ENCODE measurements at regions of chr3 and their contacts with region 1.

Region 1: DNA sequence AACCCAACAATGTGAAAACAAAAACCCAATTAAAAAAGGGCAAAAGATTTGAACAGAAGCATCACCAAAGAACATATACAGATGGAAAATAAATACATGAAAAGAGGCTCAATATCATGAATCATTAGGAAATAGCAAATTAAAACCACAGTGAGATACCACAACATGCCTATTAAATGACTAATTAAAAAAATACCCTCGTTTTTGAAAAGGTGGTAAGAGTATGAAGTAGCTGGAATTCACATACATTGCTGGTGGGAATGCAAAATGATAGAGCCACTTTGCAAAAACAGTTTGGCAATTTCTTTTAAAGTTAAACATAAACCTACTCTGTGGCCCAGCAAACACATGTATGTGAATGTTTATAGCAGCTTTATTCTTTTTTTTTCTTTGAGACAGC is 75.8 kb downstream of the B3GNT5 start:
- DNase-seq: no peak
- H3K4me3 Mint-ChIP-seq: no peak overlapping the region
- H3K27ac Mint-ChIP-seq: peak overlapping the region; percentile 2
- H3K4me1 Mint-ChIP-seq: peaks cover 45% of the 10 kb centered on the region
- H3K27me3 Mint-ChIP-seq: peaks cover 8% of the 10 kb centered on the region
- CTCF ChIP-seq: no peak

Region 2: GRCh38 chr3:183252973-183253901 is 75.6 kb before region 1 on chr3 and contains the start of gene B3GNT5:
- CTCF ChIA-PET with region 1: no interaction called
- intact Hi-C with region 1: loop called (anchors 2 kb)
- DNase-seq: peak; percentile 91
- H3K4me3 Mint-ChIP-seq: peak within 1 kb of the TSS; percentile 84
- H3K27ac Mint-ChIP-seq: peak within 1 kb of the TSS; percentile 55
- H3K4me1 Mint-ChIP-seq: peaks cover 30% of the 10 kb centered on the region
- H3K27me3 Mint-ChIP-seq: no peaks in the 10 kb centered on the region
- CTCF ChIP-seq: no peak
- total RNA-seq, gene B3GNT5: 42.9 and 43.6 TPM in 2 replicates

Region 3: DNA sequence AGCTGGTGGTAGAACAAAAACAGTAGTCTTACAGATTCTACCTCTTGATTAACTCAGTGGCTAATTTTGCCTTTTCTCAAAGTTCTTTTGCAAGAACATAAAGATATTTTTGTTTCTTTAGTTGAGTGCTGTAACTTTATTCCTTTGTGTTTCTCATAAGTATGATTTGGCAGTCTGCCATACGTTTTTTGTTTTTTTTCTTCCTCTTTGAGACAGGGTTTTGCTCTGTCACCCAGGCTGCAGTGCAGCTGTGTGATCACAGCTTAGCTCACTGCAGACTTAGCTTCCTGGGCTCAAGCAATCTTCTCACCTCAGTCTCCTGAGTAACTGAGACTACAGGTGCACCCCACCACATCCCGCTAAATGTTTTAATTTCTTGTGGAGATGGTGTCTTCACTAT is 53.4 kb before region 1 on chr3:
- CTCF ChIA-PET with region 1: interaction called, 4 read pairs
- intact Hi-C with region 1: loop called (anchors 5 kb)
- DNase-seq: peak; percentile 64
- H3K4me3 Mint-ChIP-seq: peak overlapping the region; percentile 29
- H3K27ac Mint-ChIP-seq: peak overlapping the region; percentile 63
- H3K4me1 Mint-ChIP-seq: peaks cover 53% of the 10 kb centered on the region
- H3K27me3 Mint-ChIP-seq: no peaks in the 10 kb centered on the region
- CTCF ChIP-seq: no peak

Region 4: DNA sequence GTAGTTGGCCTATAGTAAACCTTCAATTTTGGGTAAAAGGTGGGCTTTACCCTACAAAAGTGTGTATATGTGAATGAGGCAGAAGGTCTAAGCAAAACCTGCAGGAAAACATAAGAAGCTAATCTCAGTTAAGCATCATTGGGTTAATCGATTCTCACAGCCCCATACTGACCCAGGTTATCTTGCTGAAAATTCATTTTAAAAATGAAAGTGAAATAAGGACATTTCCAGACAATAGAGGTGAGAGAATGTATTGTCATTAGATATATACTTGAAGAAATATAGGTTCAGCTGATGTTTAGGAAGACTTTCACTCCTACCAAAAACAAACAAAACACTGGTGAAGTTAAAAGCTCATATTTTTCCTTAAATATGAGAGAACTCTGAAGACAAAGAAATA is 14.0 kb after region 1 on chr3:
- CTCF ChIA-PET with region 1: interaction called, 10 read pairs
- intact Hi-C with region 1: loop called (anchors 1 kb)
- DNase-seq: no peak
- H3K4me3 Mint-ChIP-seq: no peak overlapping the region
- H3K27ac Mint-ChIP-seq: no peak overlapping the region
- H3K4me1 Mint-ChIP-seq: no peaks in the 10 kb centered on the region
- H3K27me3 Mint-ChIP-seq: peaks cover 16% of the 10 kb centered on the region
- CTCF ChIP-seq: no peak

Region 5: DNA sequence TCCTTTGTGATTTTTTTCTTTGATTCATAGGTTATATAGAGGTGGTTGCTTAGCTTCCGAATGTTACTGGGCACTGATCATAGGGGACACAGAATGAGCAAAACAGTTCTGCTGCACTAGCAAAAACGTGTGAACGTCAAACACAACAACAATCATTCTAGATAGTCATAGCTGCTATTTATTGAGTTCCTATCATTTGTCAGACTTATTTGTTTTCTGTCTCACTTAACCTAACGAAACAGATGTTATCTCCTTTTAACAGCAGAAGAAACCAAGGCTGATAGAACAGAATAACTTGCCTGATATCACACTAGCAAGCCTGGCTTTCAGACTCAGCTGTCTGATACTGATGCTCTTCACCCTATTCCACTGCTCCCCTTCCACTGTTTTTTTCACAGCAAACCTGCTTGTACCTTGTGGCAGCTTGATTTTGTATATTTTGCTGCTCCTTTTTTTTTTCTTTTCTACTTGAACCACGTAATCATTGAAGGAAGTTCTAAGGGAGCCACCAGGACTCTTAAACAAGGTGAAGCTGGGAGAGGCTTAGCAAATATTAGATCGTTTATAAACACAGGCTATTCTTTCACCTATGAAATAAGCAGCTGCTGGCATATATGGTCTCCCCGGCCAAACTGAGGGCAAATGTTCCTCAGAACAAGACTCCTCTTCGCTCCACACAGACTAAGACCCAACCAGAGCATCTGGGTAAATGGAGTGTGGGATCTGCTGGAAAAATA is 20.8 kb after region 1 on chr3:
- CTCF ChIA-PET with region 1: no interaction called
- intact Hi-C with region 1: loop called (anchors 1 kb)
- DNase-seq: no peak
- H3K4me3 Mint-ChIP-seq: no peak overlapping the region
- H3K27ac Mint-ChIP-seq: no peak overlapping the region
- H3K4me1 Mint-ChIP-seq: peaks cover 8% of the 10 kb centered on the region
- H3K27me3 Mint-ChIP-seq: peaks cover 15% of the 10 kb centered on the region
- CTCF ChIP-seq: no peak

Measured in Calu3 (cell line).